HepG2 (cell line): ENCODE measurements at regions of chr20 and their contacts with region 1.

Region 1: DNA sequence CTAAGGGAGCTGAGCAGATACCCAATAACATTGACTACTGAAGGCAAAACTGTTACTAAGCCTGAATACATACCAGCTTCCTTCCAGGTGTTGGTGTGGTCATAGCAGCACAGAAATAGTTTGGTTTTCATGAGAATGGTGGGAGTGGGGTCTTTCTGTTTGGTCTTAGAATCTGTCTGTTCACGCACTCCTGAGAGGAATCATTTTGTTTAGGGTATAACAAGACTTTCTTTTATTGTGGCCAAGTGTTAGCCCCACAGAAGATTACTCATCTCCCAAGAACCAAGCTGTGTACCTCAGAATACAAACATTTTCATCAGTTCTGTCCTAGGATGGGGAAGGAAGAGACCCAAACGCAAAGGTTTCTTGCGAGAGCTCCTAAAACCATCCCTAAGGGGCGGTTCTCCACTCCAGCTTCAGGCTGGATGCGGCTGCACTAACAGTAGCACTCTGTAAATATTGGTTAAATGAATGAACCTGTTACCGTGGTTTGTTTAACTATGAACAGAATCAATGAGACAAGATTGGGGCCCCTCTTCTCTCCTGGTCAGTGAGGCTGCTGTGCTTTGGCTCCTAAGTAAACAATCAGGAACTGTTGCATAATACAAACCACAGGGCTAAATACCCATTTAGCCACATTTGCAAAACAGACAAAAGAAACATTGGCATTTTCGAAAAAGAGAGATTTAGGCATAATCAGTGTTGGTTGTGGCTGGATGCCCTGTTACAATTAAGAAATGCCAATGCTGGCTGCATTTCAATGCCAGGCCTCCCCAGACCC is 44.9 kb downstream of the SNAP25 start:
- DNase-seq: peak; percentile 95
- ATAC-seq: peak; percentile 100
- H3K4me3 ChIP-seq: no peak overlapping the region; a peak in 1 of 6 replicates
- H3K27ac ChIP-seq: no peak overlapping the region
- H3K4me1 ChIP-seq: peaks cover 27% of the 10 kb centered on the region
- H3K27me3 ChIP-seq: peaks cover 0 to 18% of the 10 kb centered on the region in 2 experiments; a peak in 3 of 5 replicates
- CTCF ChIP-seq: no peak
- EP300 ChIP-seq: peak; percentile 70 to 94; a peak in 3 of 4 replicates
- POLR2A ChIP-seq: no peak
- RAD21 ChIP-seq: no peak

Region 2: GRCh38 chr20:10404023-10404628 is 140.6 kb after region 1 on chr20:
- CTCF ChIA-PET with region 1: no interaction called
- POLR2A ChIA-PET with region 1: no interaction called
- in situ Hi-C with region 1: no loop called
- intact Hi-C with region 1: loop called (anchors 5 kb)
- DNase-seq: no peak
- ATAC-seq: peak; percentile 90
- H3K4me3 ChIP-seq: no peak overlapping the region
- H3K27ac ChIP-seq: no peak overlapping the region
- H3K4me1 ChIP-seq: peaks cover 2% of the 10 kb centered on the region
- H3K27me3 ChIP-seq: no peaks in the 10 kb centered on the region
- CTCF ChIP-seq: peak; percentile 48
- EP300 ChIP-seq: no peak
- POLR2A ChIP-seq: no peak
- RAD21 ChIP-seq: peak; percentile 23; the same call in 1 of the 2 replicates